ENCODE measurements at regions of chr9 and their contacts with region 1.

Region 1: DNA sequence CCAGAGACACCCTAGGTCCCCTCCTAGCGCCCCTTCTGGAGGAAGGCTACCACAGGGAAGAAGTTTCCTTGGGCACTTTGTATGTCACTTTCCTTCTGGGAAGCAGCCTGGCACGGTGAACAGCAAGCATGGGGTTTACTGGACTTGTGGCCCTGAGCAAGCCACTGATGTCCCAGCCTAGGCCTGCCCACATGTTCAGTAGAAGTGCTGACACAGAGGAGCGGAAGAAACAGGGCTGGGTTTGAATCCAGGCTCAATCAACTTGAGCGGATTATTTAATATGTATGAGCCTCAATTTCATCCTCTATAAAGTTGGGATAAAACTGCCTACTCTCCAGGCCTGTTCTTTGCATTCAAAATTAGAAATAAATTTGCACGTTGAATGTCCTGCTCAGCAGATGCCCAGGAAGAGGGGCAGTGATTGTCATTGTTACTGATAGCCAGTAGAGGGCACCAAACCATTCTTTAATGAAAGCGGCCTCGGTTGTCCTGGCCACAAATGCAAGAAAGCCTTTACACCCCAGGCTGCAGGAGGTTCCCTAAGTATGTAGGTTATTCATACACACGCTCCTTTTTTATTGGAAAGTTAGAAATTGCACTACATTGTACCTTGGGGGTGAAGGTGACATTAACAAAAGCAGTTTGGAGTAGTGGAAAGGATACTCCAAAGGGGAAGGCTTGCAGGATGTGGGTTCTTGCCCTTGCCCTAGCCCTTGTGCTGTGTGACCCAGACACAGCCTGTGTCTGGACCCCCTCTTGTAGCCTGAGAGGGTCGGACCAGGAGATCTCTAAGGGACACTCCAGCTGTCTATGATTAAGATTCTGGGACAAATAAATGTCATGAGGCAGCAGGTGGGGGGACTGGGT is 13.4 kb upstream of the XPA start:
- DNase-seq: peak; percentile 69
- H3K4me3 ChIP-seq: no peak overlapping the region
- H3K27ac ChIP-seq: no peak overlapping the region
- H3K4me1 ChIP-seq: no peaks in the 10 kb centered on the region
- H3K27me3 ChIP-seq: peaks cover 14 to 17% of the 10 kb centered on the region in 2 experiments
- CTCF ChIP-seq: peak; percentile 73 to 76
- POLR2A ChIP-seq: no peak

Region 2: DNA sequence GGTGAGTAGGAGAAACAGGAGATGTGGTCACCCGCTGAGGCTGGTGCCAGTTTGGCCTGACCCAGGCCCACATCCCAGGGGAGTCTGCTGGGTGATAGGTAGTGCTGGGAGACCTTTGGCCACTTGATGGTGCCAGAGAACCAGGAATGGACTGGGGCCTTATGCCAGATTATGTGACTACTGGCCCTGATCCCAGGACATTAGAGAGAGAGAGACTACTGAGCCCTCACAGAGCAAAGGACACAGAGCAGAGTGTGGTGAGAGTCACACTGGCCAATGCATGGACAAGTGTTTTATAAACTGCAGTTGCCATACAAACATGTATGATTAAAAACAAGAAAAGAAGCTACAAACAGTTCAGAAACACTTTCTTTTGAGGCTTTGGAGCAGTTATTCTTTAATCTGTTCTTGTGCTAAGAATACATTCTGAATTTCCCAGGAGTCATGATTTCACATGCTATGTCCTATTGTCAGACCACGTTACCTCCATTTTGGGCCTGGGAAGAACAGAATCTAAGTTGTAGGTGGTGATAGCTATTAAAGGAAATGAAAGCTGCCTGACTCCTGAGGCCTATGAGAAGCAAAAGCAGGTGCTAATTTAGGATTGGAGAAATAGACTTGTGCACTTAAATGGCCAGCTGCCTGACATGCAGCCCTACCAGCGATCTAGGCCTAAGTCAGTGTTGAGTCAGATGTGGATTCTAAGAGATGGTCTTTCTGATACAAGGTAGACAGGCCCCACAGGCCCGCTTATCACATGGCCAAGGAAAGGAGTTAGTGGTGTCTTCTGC is 241.7 kb before region 1 on chr9:
- CTCF ChIA-PET with region 1: no interaction called
- POLR2A ChIA-PET with region 1: no interaction called
- dilution Hi-C with region 1: no loop called
- intact Hi-C with region 1: loop called (anchors 1 kb)
- DNase-seq: peak; percentile 77
- H3K4me3 ChIP-seq: no peak overlapping the region
- H3K27ac ChIP-seq: no peak overlapping the region
- H3K4me1 ChIP-seq: no peaks in the 10 kb centered on the region
- H3K27me3 ChIP-seq: no peaks in the 10 kb centered on the region
- CTCF ChIP-seq: peak; percentile 79 to 81
- POLR2A ChIP-seq: no peak

Region 3: GRCh38 chr9:97853844-97854695 is 143.5 kb after region 1 on chr9:
- CTCF ChIA-PET with region 1: no interaction called
- POLR2A ChIA-PET with region 1: no interaction called
- dilution Hi-C with region 1: no loop called
- intact Hi-C with region 1: loop called (anchors 2 kb)
- DNase-seq: no peak
- H3K4me3 ChIP-seq: peak overlapping the region in 1 of 3 experiments; percentile 8
- H3K27ac ChIP-seq: no peak overlapping the region
- H3K4me1 ChIP-seq: peaks cover under 1% of the 10 kb centered on the region
- H3K27me3 ChIP-seq: peaks cover 83 to 99% of the 10 kb centered on the region in 2 experiments
- CTCF ChIP-seq: peak in 1 of 2 donors; percentile 3
- POLR2A ChIP-seq: no peak

Region 4: DNA sequence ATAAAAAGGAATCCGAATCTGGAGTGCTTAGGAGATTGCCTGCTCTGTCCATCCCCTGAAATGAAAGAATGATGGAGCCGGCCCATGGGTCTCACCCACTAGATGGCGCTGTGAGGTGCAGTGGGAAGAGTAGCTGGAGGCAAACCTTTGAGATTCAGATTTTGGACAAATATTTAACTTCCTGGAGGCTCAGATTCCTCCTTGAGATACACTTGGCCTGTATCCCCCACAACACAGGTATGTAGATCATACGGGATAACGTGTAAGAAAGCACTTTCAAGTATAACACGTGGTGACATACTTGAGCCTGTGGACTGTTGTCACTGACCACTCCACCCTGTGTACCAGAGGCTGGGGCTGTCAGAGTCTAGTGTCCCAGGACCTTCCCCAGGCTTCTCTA is 179.4 kb after region 1 on chr9:
- CTCF ChIA-PET with region 1: interaction called, 8 read pairs
- POLR2A ChIA-PET with region 1: no interaction called
- dilution Hi-C with region 1: no loop called
- intact Hi-C with region 1: loop called (anchors 2 kb)
- DNase-seq: peak; percentile 22
- H3K4me3 ChIP-seq: no peak overlapping the region
- H3K27ac ChIP-seq: no peak overlapping the region
- H3K4me1 ChIP-seq: no peaks in the 10 kb centered on the region
- H3K27me3 ChIP-seq: peaks cover 8 to 9% of the 10 kb centered on the region in 2 experiments
- CTCF ChIP-seq: peak; percentile 73 to 92
- POLR2A ChIP-seq: no peak

Region 5: GRCh38 chr9:97900738-97901565 is 190.4 kb after region 1 on chr9:
- CTCF ChIA-PET with region 1: interaction called, 26 read pairs
- POLR2A ChIA-PET with region 1: no interaction called
- dilution Hi-C with region 1: no loop called
- intact Hi-C with region 1: loop called (anchors 1 kb)
- DNase-seq: peak; percentile 45
- H3K4me3 ChIP-seq: no peak overlapping the region
- H3K27ac ChIP-seq: no peak overlapping the region
- H3K4me1 ChIP-seq: peaks cover under 1% of the 10 kb centered on the region
- H3K27me3 ChIP-seq: no peaks in the 10 kb centered on the region
- CTCF ChIP-seq: peak; percentile 61 to 69
- POLR2A ChIP-seq: no peak

Region 6: DNA sequence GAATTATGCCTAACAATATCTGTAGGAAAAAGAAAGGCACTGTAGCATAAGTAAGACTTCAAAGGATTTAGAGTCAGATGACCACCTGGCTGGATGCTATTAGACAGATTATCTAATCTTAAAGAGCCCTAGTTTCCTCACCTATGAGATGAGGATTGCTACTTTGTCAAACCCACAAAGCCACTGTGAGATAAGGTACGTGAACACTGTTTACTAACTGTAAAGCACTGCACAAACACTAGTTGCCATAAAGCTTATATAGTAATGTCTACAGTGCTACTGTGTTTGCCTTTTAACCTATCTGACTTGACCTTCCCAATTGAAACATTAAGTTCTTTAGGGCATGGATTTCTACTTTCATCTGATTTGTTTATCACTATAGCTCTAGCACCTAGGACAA is 201.4 kb after region 1 on chr9:
- CTCF ChIA-PET with region 1: no interaction called
- POLR2A ChIA-PET with region 1: no interaction called
- dilution Hi-C with region 1: no loop called
- intact Hi-C with region 1: no loop called
- DNase-seq: no peak
- H3K4me3 ChIP-seq: no peak overlapping the region
- H3K27ac ChIP-seq: no peak overlapping the region
- H3K4me1 ChIP-seq: no peaks in the 10 kb centered on the region
- H3K27me3 ChIP-seq: no peaks in the 10 kb centered on the region
- CTCF ChIP-seq: no peak
- POLR2A ChIP-seq: no peak

Region 7: DNA sequence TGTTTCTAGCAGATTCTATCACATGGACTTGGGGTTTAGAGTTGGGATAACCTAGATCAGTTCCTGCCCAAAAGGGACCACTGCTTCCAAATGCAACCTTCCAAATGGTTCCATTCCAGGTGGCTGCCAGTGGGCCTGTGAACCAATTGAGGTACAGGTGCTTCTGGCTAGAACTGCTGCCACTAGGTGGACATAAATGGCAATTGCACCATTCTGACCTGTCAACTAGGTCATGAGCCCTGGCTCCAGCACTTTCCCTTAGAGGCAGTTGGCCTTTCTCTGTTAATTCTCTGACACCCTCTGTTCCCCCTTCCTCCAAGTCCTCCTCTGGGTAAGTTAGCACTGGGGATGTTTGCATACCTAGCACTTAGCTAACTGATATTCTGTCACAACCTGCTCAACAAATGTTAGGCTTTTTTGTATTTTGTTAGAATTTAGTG is 244.0 kb after region 1 on chr9:
- CTCF ChIA-PET with region 1: no interaction called
- POLR2A ChIA-PET with region 1: no interaction called
- dilution Hi-C with region 1: no loop called
- intact Hi-C with region 1: loop called (anchors 1 kb)
- DNase-seq: peak; percentile 21
- H3K4me3 ChIP-seq: no peak overlapping the region
- H3K27ac ChIP-seq: no peak overlapping the region
- H3K4me1 ChIP-seq: no peaks in the 10 kb centered on the region
- H3K27me3 ChIP-seq: peaks cover 2 to 3% of the 10 kb centered on the region in 2 experiments
- CTCF ChIP-seq: peak; percentile 37 to 58
- POLR2A ChIP-seq: no peak

Region 8: DNA sequence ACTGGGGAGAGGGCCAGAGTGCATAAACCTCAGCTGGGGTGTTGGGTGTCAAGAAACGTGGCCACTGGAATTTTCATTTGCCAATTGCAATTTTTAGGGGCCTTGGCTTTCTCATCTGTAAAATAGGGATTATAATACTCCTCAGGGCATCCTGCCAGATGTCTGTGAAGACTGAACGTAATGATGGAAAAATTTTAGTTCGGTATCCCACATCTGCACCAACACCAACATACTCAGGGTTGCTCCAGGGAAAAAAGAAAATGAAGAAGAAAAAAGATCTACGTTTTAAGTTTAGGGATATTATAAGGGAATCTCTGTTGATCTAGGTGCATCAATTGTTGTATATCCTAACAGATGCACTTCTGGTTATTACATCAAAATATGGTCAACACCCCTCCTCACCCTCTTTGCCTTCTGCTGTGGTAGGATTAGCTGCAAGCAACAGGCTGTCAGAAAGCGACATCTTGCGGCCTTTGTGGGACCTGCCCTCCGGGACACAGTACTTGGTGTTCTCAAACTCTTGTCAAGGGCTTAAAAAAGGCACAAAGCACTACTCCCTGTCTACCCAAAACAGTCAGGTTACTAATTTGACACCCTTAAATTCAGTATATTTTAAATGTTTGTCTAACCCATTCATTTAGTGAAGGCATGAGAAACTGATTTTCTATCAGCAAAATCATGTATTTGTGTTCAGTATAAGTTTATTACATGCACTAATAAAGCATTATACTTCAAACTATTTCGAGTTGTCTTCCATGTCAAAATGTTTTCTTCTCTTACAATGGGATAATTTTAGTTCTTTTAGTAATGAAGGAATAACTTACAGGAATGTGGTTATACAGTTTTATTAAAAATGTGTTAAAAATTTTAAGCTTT is 553.1 kb after region 1 on chr9:
- CTCF ChIA-PET with region 1: no interaction called
- POLR2A ChIA-PET with region 1: no interaction called
- dilution Hi-C with region 1: no loop called
- intact Hi-C with region 1: loop called (anchors 5 kb)
- DNase-seq: peak; percentile 82
- H3K4me3 ChIP-seq: no peak overlapping the region
- H3K27ac ChIP-seq: no peak overlapping the region
- H3K4me1 ChIP-seq: no peaks in the 10 kb centered on the region
- H3K27me3 ChIP-seq: no peaks in the 10 kb centered on the region
- CTCF ChIP-seq: peak; percentile 90 to 92
- POLR2A ChIP-seq: no peak